ENCODE measurements at regions of chr15 and their contacts with region 1.

Region 1: DNA sequence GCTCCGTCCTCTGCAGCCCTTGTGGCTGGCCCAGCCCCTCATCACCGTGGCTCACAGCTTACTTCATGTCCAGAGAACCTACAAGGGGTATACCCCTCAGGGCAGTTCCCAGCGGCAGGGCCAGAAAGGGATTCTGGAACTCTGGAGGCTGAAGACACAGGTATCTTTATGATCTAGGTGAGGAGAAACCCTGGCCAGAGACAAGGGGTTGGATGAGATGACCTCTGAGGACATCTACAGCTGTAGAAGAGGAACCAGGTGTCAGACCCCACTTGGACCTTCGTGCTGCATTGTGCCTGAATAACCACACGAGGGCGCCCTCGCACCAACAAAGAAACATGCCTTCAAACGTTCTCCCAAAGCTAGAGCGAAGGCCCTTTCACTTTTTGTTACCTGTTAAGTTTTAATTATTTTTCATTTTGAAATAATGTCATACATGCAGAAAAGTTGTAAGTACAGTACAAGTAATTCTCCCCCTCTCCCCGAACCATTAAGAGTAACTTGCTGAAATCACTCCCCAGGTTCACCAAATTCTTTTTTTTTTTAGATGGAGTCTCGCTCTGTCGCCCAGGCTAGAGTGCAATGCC is 118.7 kb upstream of the SMAD3 start:
- DNase-seq: peak in 1 of 2 experiments; percentile 84
- H3K4me3 ChIP-seq: no peak overlapping the region
- H3K27ac ChIP-seq: no peak overlapping the region
- H3K4me1 ChIP-seq: peaks cover 0 to 3% (median 0%) of the 10 kb centered on the region in 4 experiments; a peak in 3 of 7 replicates
- H3K27me3 ChIP-seq: no peaks in the 10 kb centered on the region
- CTCF ChIP-seq: peak; percentile 84 to 90 (median 89)
- EP300 ChIP-seq: no peak
- POLR2A ChIP-seq: no peak
- RAD21 ChIP-seq: peak; percentile 97 to 99

Region 2: DNA sequence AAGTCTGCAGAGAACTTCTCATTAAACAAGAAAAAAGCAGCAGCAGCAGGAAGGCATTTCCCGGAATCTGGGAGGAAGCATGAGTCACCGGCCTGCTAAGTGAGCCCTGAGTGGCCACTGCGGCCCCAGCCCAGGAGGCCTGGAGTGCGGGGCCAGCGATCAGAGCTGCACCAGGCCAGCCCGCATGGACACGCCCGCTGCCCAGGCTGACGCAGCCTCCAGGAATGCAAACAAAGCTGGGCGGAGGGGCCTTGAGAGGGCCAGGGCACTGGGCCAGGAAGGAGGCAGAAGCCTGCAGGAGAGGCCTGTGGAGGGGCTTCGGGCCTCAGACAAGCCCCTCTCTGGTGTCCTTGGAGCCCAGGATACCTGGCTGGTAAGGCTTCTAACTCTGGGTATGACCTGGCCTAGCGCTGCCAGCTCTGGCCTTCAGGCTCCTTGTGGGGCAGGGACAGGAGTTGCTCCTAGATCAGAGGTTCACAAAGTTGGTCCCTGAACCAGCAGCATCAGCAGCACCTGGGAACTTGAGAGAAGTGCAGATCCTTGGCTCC is 143.4 kb before region 1 on chr15:
- CTCF ChIA-PET with region 1: no interaction called
- POLR2A ChIA-PET with region 1: no interaction called
- DNase-seq: peak; percentile 56 to 73
- H3K4me3 ChIP-seq: no peak overlapping the region
- H3K27ac ChIP-seq: no peak overlapping the region
- H3K4me1 ChIP-seq: peaks cover 0 to 9% (median 7%) of the 10 kb centered on the region in 4 experiments; a peak in 5 of 7 replicates
- H3K27me3 ChIP-seq: no peaks in the 10 kb centered on the region
- CTCF ChIP-seq: no peak
- EP300 ChIP-seq: no peak
- POLR2A ChIP-seq: no peak
- RAD21 ChIP-seq: no peak; a peak in 1 of 4 replicates

Region 3: DNA sequence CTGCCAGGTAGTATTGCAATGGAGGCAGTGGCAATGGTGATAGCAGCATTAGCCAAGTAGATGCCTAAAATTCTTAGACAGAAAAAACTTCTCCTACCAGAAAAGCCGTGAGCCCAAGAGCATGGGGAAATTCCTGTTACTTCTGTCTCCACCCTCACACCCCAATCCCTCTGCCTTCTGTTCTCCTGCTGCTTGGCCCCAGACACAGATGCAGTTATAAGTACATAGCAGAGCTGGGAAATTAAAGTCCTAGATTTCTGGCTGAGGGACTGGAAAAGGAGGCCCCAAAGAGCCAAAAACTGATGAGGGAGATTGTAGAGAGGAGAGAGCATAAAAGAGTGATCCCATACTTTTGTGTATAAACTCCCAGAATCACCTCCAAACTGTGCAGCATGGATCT is 77.8 kb before region 1 on chr15:
- CTCF ChIA-PET with region 1: no interaction called
- POLR2A ChIA-PET with region 1: no interaction called
- DNase-seq: no peak
- H3K4me3 ChIP-seq: no peak overlapping the region
- H3K27ac ChIP-seq: no peak overlapping the region
- H3K4me1 ChIP-seq: peaks cover 0 to 6% (median 3%) of the 10 kb centered on the region in 4 experiments; a peak in 5 of 7 replicates
- H3K27me3 ChIP-seq: no peaks in the 10 kb centered on the region
- CTCF ChIP-seq: no peak
- EP300 ChIP-seq: no peak
- POLR2A ChIP-seq: no peak
- RAD21 ChIP-seq: no peak

Region 4: DNA sequence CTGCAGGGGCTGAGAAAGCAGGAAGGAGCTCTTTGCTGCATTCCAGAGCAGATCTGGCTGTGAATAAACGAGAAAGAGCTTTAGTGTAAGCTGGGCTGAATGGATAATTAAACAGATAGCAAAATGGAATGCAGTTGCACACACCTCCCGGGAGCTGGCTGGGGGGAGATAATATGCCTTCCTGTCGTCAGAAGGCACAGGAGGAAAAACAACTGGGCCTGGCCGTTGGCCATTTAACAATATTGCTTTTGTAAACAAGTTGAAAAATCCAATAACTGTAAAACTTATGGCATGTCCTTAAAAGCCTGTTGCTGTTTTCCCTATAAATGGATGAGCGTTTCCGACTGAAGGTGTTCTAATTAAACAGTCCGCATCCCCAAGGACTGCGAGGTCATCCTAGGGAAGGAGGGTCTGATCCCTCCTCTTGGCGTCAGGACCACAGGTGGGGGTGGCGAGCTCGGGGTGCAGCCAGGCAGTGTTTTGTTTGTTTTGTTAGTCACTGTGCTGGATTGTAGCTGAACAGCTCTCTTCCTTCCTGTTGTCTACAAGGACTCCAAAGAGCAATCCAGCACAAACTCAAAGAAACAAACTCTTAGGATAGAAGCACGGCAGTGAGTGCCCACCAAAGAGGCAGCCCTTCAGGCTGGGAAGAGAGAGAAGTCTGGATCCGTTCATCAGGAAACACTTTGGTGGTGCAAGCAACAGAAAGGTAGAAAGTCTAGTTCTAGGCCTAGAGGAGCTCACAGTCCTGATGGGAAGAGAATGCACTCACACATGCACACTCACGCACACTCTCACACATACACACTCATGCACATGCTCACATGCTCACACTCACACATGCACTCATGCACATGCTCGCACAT is 14.7 kb before region 1 on chr15:
- CTCF ChIA-PET with region 1: interaction called, 12 read pairs
- POLR2A ChIA-PET with region 1: interaction called, 3 read pairs
- DNase-seq: no peak
- H3K4me3 ChIP-seq: no peak overlapping the region
- H3K27ac ChIP-seq: 0 out of 2 replicates have a peak overlapping the region, but pooled peaks have one; percentile 30
- H3K4me1 ChIP-seq: peaks cover 0 to 10% (median 5%) of the 10 kb centered on the region in 4 experiments; a peak in 4 of 7 replicates
- H3K27me3 ChIP-seq: no peaks in the 10 kb centered on the region
- CTCF ChIP-seq: no peak
- EP300 ChIP-seq: no peak
- POLR2A ChIP-seq: no peak
- RAD21 ChIP-seq: no peak

Region 5: GRCh38 chr15:67165254-67166253 is 218.9 kb after region 1 on chr15:
- CTCF ChIA-PET with region 1: interaction called, 10 read pairs
- POLR2A ChIA-PET with region 1: no interaction called
- DNase-seq: peak; percentile 69 to 80
- H3K4me3 ChIP-seq: peak overlapping the region in 3 of 4 experiments; percentile 5 to 30 (median 11); a peak in 3 of 8 replicates
- H3K27ac ChIP-seq: no peak overlapping the region; the same call in 1 of the 2 replicates
- H3K4me1 ChIP-seq: peaks cover 15 to 31% (median 22%) of the 10 kb centered on the region in 4 experiments
- H3K27me3 ChIP-seq: peaks cover 0 to 2% (median 0%) of the 10 kb centered on the region in 4 experiments; a peak in 1 of 7 replicates
- CTCF ChIP-seq: no peak
- EP300 ChIP-seq: no peak
- POLR2A ChIP-seq: no peak
- RAD21 ChIP-seq: no peak

Region 6: GRCh38 chr15:67240235-67241131 is 293.8 kb after region 1 on chr15:
- CTCF ChIA-PET with region 1: interaction called, 12 read pairs
- POLR2A ChIA-PET with region 1: no interaction called
- DNase-seq: no peak
- H3K4me3 ChIP-seq: no peak overlapping the region
- H3K27ac ChIP-seq: no peak overlapping the region
- H3K4me1 ChIP-seq: peaks cover 0 to 8% (median 3%) of the 10 kb centered on the region in 4 experiments; a peak in 4 of 7 replicates
- H3K27me3 ChIP-seq: no peaks in the 10 kb centered on the region
- CTCF ChIP-seq: peak; percentile 42 to 52 (median 51)
- EP300 ChIP-seq: no peak
- POLR2A ChIP-seq: no peak
- RAD21 ChIP-seq: peak; percentile 58 to 74